Mammary epithelial cell (primary cell): ENCODE measurements at regions of chr3 and their contacts with region 1.

Region 1: GRCh38 chr3:163951397-163951987 is 1126.8 kb downstream of the SI start:
- DNase-seq: no peak
- H3K4me3 ChIP-seq: no peak overlapping the region
- H3K27ac ChIP-seq: no peak overlapping the region
- H3K4me1 ChIP-seq: no peaks in the 10 kb centered on the region
- H3K27me3 ChIP-seq: no peaks in the 10 kb centered on the region
- CTCF ChIP-seq: peak in 1 of 2 donors; percentile 30

Region 2: DNA sequence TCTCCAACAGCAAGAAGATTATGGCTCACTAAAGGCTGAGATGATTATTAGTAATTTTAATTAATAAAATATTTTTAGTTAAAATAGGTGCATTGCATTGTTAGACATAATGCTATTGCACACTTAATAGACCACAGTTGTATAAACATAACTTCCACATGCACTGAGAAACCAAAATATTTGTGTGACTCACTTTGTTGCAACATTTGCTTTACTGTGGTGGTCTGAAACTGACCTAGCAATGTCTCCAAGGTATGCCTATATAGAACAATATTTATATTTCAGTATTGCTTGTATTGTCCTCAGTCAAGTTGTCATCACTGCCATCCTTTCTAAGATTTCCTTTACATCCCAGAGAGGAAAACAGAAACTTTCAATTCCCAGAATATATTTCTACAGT is 88.3 kb before region 1 on chr3:
- CTCF ChIA-PET with region 1: no interaction called
- dilution Hi-C with region 1: loop called (anchors 10 kb)
- in situ Hi-C with region 1: no loop called
- intact Hi-C with region 1: no loop called
- DNase-seq: no peak
- H3K4me3 ChIP-seq: no peak overlapping the region
- H3K27ac ChIP-seq: no peak overlapping the region
- H3K4me1 ChIP-seq: no peaks in the 10 kb centered on the region
- H3K27me3 ChIP-seq: no peaks in the 10 kb centered on the region
- CTCF ChIP-seq: no peak